Naive thymus-derived CD4-positive, alpha-beta T cell (primary cell): ENCODE measurements at regions of chr11 and their contacts with region 1.

Region 1: DNA sequence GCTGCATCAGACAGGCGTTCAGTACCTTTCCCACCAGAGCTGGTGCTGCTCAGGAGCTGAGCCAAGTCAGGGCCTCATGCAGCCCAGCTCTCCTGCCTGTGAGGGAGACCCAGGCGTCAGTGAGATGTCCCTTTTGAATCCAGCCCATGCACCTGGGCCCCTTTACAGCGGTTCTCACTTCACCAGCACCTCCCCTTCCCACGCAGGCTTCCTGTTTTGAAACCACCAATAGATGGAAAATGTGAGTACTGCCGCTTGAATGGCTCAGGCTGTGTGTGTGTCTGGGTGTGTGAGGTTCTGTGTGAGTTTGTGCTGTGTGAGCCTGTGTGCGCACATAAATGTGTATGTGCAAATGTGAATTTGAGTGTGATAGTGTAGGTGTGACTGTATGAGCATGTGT is 88.4 kb downstream of the UBASH3B start:
- DNase-seq: peak; percentile 28 to 90 (median 80)
- ATAC-seq: peak; percentile 75
- H3K4me3 ChIP-seq: peak overlapping the region; percentile 39
- H3K4me3 Mint-ChIP-seq: no peak overlapping the region
- H3K27ac ChIP-seq: peak overlapping the region; percentile 84
- H3K27ac Mint-ChIP-seq: no peak overlapping the region
- H3K4me1 ChIP-seq: peaks cover 58 to 66% of the 10 kb centered on the region in 2 donors
- H3K4me1 Mint-ChIP-seq: peaks cover 0 to 40% (median 18%) of the 10 kb centered on the region in 7 donors
- H3K27me3 ChIP-seq: no peaks in the 10 kb centered on the region
- H3K27me3 Mint-ChIP-seq: peaks cover 0 to 21% (median 0%) of the 10 kb centered on the region in 5 donors

Region 2: DNA sequence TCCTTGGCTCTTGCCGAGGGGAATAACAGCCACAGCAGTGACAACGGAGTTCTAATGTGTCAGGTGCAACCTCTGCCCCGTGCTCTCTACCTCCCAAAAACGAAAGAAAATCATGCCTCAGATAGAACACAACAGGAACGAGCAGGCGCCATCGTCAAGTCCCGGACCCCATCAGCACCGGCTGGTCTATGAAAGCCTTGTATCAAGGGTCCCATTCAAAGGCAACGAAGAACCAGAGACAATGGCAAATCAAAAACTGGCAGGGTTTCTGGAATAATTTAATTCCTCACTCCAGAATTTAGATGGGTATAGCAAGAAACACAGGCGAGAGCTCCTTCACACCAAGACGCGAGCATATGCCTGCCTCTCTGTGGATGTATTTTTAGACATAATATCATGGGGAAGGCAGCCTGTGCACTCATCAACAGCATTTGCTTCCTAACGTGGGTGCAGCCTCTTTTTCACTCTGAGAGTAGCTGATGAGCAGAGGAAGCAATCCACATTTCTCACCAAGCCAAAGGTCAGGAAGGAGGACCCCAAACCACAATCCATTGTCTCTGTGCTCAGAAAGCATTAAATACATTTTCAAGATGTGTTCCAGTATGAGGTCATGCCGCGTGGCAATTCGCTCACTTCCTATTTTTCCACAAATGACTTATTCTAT is 434.6 kb before region 1 on chr11:
- CTCF ChIA-PET with region 1: no interaction called
- POLR2A ChIA-PET with region 1: no interaction called
- intact Hi-C with region 1: no loop called
- DNase-seq: no peak
- ATAC-seq: no peak
- H3K4me3 ChIP-seq: no peak overlapping the region
- H3K4me3 Mint-ChIP-seq: no peak overlapping the region
- H3K27ac ChIP-seq: no peak overlapping the region
- H3K27ac Mint-ChIP-seq: no peak overlapping the region
- H3K4me1 ChIP-seq: no peaks in the 10 kb centered on the region
- H3K4me1 Mint-ChIP-seq: no peaks in the 10 kb centered on the region
- H3K27me3 ChIP-seq: no peaks in the 10 kb centered on the region
- H3K27me3 Mint-ChIP-seq: peaks cover 0 to 30% (median 9%) of the 10 kb centered on the region in 5 donors

Region 3: DNA sequence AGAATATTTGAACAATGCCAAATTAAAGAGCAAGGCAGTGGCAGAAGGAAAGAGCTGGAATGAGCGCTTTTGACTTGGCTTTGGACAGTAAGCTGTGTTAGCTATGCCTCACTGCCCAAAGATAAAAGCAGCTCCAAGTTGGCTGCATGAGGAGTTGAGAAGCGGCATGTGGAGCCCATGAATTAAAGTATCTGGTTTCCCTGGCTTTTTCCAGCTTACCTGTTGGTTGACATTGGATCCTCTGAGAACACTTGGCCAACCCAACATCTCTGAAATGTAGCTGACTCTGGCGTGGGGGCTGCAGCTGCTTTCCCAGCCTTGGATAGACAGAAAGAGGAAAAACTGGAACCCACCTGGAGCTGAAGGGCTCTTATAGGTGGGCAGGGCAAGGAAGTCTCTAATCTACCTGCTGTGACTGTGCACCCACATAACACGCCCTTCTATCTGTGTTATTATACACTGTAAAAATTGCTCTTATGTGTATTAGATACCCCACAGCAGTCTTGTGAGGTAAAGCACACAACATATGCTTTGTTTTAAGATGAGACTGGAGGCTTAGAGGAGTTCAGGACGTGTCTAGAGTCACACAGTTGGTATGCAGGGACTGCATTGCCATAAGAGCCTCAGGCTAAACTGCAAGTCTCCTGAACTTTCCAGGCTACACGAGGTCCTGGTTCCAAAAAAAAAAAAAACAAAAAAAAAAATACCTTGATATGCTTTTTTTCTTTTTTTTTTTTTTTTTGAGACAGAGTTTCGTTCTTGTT is 82.6 kb before region 1 on chr11:
- CTCF ChIA-PET with region 1: interaction called, 42 read pairs
- POLR2A ChIA-PET with region 1: interaction called, 16 read pairs
- intact Hi-C with region 1: loop called in 1 of 2 experiments (anchors 1 kb)
- DNase-seq: no peak
- ATAC-seq: no peak
- H3K4me3 ChIP-seq: no peak overlapping the region
- H3K4me3 Mint-ChIP-seq: peak overlapping the region in 1 of 10 donors; percentile 35
- H3K27ac ChIP-seq: no peak overlapping the region
- H3K27ac Mint-ChIP-seq: peak overlapping the region in 7 of 9 donors; percentile 21 to 94 (median 77)
- H3K4me1 ChIP-seq: peaks cover 14 to 48% of the 10 kb centered on the region in 2 donors
- H3K4me1 Mint-ChIP-seq: peaks cover 12 to 93% (median 76%) of the 10 kb centered on the region in 7 donors
- H3K27me3 ChIP-seq: no peaks in the 10 kb centered on the region
- H3K27me3 Mint-ChIP-seq: peaks cover 0 to 22% (median 0%) of the 10 kb centered on the region in 5 donors

Region 4: DNA sequence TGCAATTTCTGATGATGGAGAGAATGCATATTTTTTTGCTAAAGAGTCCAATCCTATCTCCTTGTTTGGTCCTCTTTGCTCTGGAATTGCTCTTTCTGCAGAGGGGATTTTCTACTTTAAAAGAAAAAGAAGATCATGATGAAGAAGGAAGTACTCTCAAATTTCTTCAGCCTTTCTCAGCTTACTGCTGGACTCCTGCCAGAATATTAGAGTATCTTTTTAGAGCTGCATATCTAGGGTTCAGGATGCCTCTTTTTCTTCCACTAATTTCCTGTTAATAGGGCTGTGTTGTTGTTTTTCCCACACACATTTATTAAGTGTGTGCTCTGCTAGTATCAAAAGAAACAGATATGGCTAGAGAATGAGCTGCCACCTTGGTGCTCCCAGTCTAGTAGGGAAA is 70.2 kb before region 1 on chr11:
- CTCF ChIA-PET with region 1: interaction called, 5 read pairs
- POLR2A ChIA-PET with region 1: interaction called, 41 read pairs
- intact Hi-C with region 1: loop called in 1 of 2 experiments (anchors 1 kb)
- DNase-seq: peak in 1 of 9 donors; percentile 20
- ATAC-seq: no peak
- H3K4me3 ChIP-seq: no peak overlapping the region
- H3K4me3 Mint-ChIP-seq: peak overlapping the region in 7 of 10 donors; percentile 2 to 70 (median 37)
- H3K27ac ChIP-seq: peak overlapping the region; percentile 36
- H3K27ac Mint-ChIP-seq: peak overlapping the region in 8 of 9 donors; percentile 48 to 99 (median 88)
- H3K4me1 ChIP-seq: peaks cover 43 to 70% of the 10 kb centered on the region in 2 donors
- H3K4me1 Mint-ChIP-seq: peaks cover 32 to 98% (median 83%) of the 10 kb centered on the region in 7 donors
- H3K27me3 ChIP-seq: no peaks in the 10 kb centered on the region
- H3K27me3 Mint-ChIP-seq: peaks cover 0 to 3% (median 0%) of the 10 kb centered on the region in 5 donors

Region 5: DNA sequence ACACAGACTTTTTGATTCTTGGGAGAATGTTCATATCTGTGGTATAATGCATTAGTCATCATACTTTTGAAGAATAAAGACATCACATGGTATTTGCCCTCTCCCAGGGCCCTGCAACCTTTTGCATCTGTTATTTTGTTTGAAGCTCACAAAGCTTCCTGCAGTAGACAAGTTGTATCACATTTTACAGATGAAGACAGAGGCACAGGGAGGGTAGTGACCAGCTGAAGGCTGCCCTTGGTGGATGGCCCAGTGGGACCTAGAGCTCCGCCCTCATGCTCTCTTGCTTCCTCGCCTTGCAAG is 22.0 kb before region 1 on chr11:
- CTCF ChIA-PET with region 1: interaction called, 4 read pairs
- POLR2A ChIA-PET with region 1: interaction called, 45 read pairs
- intact Hi-C with region 1: loop called (anchors 1 kb)
- DNase-seq: peak in 6 of 9 donors; percentile 10 to 42 (median 29)
- ATAC-seq: peak; percentile 44
- H3K4me3 ChIP-seq: no peak overlapping the region
- H3K4me3 Mint-ChIP-seq: peak overlapping the region in 8 of 10 donors; percentile 7 to 77 (median 44)
- H3K27ac ChIP-seq: peak overlapping the region; percentile 1
- H3K27ac Mint-ChIP-seq: peak overlapping the region in 8 of 9 donors; percentile 47 to 95 (median 81)
- H3K4me1 ChIP-seq: peaks cover 28 to 57% of the 10 kb centered on the region in 2 donors
- H3K4me1 Mint-ChIP-seq: peaks cover 51 to 86% (median 79%) of the 10 kb centered on the region in 7 donors
- H3K27me3 ChIP-seq: no peaks in the 10 kb centered on the region
- H3K27me3 Mint-ChIP-seq: peaks cover 0 to 16% (median 0%) of the 10 kb centered on the region in 5 donors

Region 6: GRCh38 chr11:122727101-122727929 is 16.6 kb before region 1 on chr11:
- CTCF ChIA-PET with region 1: interaction called, 6 read pairs
- POLR2A ChIA-PET with region 1: interaction called, 45 read pairs
- intact Hi-C with region 1: loop called (anchors 1 kb)
- DNase-seq: peak in 7 of 9 donors; percentile 33 to 56 (median 48)
- ATAC-seq: peak; percentile 77
- H3K4me3 ChIP-seq: peak overlapping the region; percentile 37
- H3K4me3 Mint-ChIP-seq: peak overlapping the region; percentile 79 to 95 (median 85)
- H3K27ac ChIP-seq: peak overlapping the region; percentile 81
- H3K27ac Mint-ChIP-seq: peak overlapping the region; percentile 88 to 100 (median 97)
- H3K4me1 ChIP-seq: peaks cover 20 to 64% of the 10 kb centered on the region in 2 donors
- H3K4me1 Mint-ChIP-seq: peaks cover 53 to 73% (median 66%) of the 10 kb centered on the region in 7 donors
- H3K27me3 ChIP-seq: no peaks in the 10 kb centered on the region
- H3K27me3 Mint-ChIP-seq: no peaks in the 10 kb centered on the region

Region 7: GRCh38 chr11:122733318-122733717 is 10.6 kb before region 1 on chr11:
- CTCF ChIA-PET with region 1: interaction called, 6 read pairs
- POLR2A ChIA-PET with region 1: interaction called, 45 read pairs
- intact Hi-C with region 1: loop called in 1 of 2 experiments (anchors 1 kb)
- DNase-seq: no peak
- ATAC-seq: peak; percentile 36
- H3K4me3 ChIP-seq: no peak overlapping the region
- H3K4me3 Mint-ChIP-seq: peak overlapping the region in 2 of 10 donors; percentile 57 to 76
- H3K27ac ChIP-seq: no peak overlapping the region
- H3K27ac Mint-ChIP-seq: peak overlapping the region in 3 of 9 donors; percentile 6 to 23 (median 21)
- H3K4me1 ChIP-seq: peaks cover 16 to 55% of the 10 kb centered on the region in 2 donors
- H3K4me1 Mint-ChIP-seq: peaks cover 11 to 45% (median 26%) of the 10 kb centered on the region in 7 donors
- H3K27me3 ChIP-seq: no peaks in the 10 kb centered on the region
- H3K27me3 Mint-ChIP-seq: no peaks in the 10 kb centered on the region